T-cell (primary cell): ENCODE measurements at regions of chr2 and their contacts with region 1.

Region 1: GRCh38 chr2:37414470-37414949 is 70.1 kb downstream of the QPCT start:
- DNase-seq: peak in 2 of 35 experiments; percentile 18 to 71
- ATAC-seq: peak; percentile 60 to 82 (median 76)
- H3K4me3 ChIP-seq: no peak overlapping the region
- H3K4me3 Mint-ChIP-seq: no peak overlapping the region
- H3K27ac ChIP-seq: no peak overlapping the region
- H3K27ac Mint-ChIP-seq: peak overlapping the region in 1 of 2 donors; percentile 64
- H3K4me1 ChIP-seq: no peaks in the 10 kb centered on the region
- H3K4me1 Mint-ChIP-seq: peaks cover 8 to 14% (median 10%) of the 10 kb centered on the region in 3 donors
- H3K27me3 ChIP-seq: peaks cover 0 to 3% of the 10 kb centered on the region in 2 experiments
- H3K27me3 Mint-ChIP-seq: peaks cover 4 to 7% of the 10 kb centered on the region in 2 donors

Region 2: GRCh38 chr2:37300578-37300977 is 113.9 kb before region 1 on chr2:
- CTCF ChIA-PET with region 1: interaction called in 1 of 2 experiments, 12 read pairs
- POLR2A ChIA-PET with region 1: no interaction called
- DNase-seq: no peak
- ATAC-seq: no peak
- H3K4me3 ChIP-seq: no peak overlapping the region
- H3K4me3 Mint-ChIP-seq: no peak overlapping the region
- H3K27ac ChIP-seq: no peak overlapping the region
- H3K27ac Mint-ChIP-seq: no peak overlapping the region
- H3K4me1 ChIP-seq: peaks cover 0 to 4% of the 10 kb centered on the region in 2 experiments
- H3K4me1 Mint-ChIP-seq: peaks cover 36 to 40% (median 37%) of the 10 kb centered on the region in 3 donors
- H3K27me3 ChIP-seq: no peaks in the 10 kb centered on the region
- H3K27me3 Mint-ChIP-seq: no peaks in the 10 kb centered on the region

Region 3: GRCh38 chr2:37402636-37403035 is 11.9 kb before region 1 on chr2:
- CTCF ChIA-PET with region 1: interaction called, 6 to 10 read pairs
- POLR2A ChIA-PET with region 1: no interaction called
- DNase-seq: no peak
- ATAC-seq: no peak
- H3K4me3 ChIP-seq: no peak overlapping the region
- H3K4me3 Mint-ChIP-seq: no peak overlapping the region
- H3K27ac ChIP-seq: no peak overlapping the region
- H3K27ac Mint-ChIP-seq: no peak overlapping the region
- H3K4me1 ChIP-seq: no peaks in the 10 kb centered on the region
- H3K4me1 Mint-ChIP-seq: no peaks in the 10 kb centered on the region
- H3K27me3 ChIP-seq: no peaks in the 10 kb centered on the region
- H3K27me3 Mint-ChIP-seq: peaks cover 4 to 6% of the 10 kb centered on the region in 2 donors

Region 4: GRCh38 chr2:37471104-37471503 is 56.6 kb after region 1 on chr2:
- CTCF ChIA-PET with region 1: interaction called, 5 to 11 read pairs
- POLR2A ChIA-PET with region 1: no interaction called
- DNase-seq: no peak
- ATAC-seq: no peak
- H3K4me3 ChIP-seq: no peak overlapping the region
- H3K4me3 Mint-ChIP-seq: no peak overlapping the region
- H3K27ac ChIP-seq: no peak overlapping the region
- H3K27ac Mint-ChIP-seq: no peak overlapping the region
- H3K4me1 ChIP-seq: no peaks in the 10 kb centered on the region
- H3K4me1 Mint-ChIP-seq: no peaks in the 10 kb centered on the region
- H3K27me3 ChIP-seq: no peaks in the 10 kb centered on the region
- H3K27me3 Mint-ChIP-seq: peaks cover 0 to 5% of the 10 kb centered on the region in 2 donors

Region 5: DNA sequence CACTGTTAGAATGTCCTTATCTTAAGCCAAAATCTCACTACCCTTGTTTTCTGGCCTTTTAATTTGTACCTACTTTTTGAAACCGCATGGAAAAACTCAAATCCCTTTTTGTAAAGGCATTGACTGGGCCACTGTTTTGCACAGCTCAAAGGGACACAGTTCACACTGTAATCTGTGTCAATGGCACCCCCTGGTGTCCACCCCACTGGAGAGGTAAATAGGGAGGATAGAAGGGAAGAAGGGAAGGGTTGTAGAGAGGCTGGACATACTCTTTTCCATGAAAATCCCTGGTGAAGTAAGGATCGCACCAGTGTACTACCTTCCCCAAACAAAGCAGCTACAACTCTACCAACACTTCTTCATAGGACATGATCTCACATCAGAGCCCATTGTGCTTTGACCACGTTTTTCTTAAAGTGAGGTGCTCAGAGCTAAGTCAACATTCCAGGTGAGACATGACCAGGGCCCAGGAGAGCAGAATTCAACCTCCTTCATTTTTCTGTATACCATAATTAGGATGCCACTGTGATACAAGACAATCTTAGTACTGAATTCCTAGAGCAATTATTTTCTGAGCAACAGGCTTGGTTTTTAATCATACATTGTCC is 418.2 kb after region 1 on chr2:
- CTCF ChIA-PET with region 1: interaction called, 47 to 124 read pairs
- POLR2A ChIA-PET with region 1: no interaction called
- DNase-seq: peak; percentile 47 to 87 (median 79)
- ATAC-seq: peak; percentile 75 to 87 (median 82)
- H3K4me3 ChIP-seq: no peak overlapping the region
- H3K4me3 Mint-ChIP-seq: no peak overlapping the region
- H3K27ac ChIP-seq: no peak overlapping the region
- H3K27ac Mint-ChIP-seq: no peak overlapping the region
- H3K4me1 ChIP-seq: peaks cover 2 to 4% of the 10 kb centered on the region in 2 experiments
- H3K4me1 Mint-ChIP-seq: peaks cover 13 to 20% (median 14%) of the 10 kb centered on the region in 3 donors
- H3K27me3 ChIP-seq: no peaks in the 10 kb centered on the region
- H3K27me3 Mint-ChIP-seq: no peaks in the 10 kb centered on the region

Region 6: DNA sequence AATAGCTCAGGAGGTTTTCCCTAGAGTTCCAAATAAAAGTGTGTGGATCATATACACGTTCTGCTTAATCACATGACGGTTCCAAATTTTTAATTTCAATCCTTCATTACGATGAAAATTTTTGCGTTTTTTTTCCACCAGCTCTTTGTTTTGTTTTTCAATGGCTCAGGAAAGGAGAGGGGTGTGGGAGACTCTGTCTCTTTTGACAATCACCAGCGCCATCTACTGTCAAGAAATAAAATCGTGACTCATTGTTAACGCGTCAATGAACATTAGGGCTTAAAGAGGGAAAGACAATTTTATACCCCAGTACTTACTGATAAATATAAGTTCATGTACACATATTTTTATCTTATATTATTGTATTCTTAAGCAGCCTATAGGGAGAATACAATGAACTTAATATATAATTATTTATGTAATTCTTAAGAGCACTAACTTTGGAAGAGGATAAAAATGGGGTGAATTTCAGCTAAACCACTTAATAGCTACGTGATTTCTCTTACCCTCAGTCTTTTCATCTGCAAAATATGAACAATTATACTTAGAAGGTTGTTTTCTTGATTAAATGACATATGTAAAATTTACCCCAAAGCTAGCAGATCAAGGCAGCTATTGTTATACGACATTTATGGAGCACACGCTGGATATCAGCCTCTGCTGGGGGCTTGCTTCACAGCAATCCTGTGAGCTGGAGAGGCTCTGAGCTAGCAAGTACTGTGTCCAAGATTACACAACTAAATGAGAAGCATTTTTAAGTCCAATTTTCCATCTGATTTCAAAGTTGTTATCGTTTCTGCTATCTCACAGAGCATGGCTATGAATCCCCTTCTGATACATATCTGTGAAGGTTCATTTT is 463.2 kb after region 1 on chr2:
- CTCF ChIA-PET with region 1: interaction called, 16 to 47 read pairs
- POLR2A ChIA-PET with region 1: no interaction called
- DNase-seq: peak in 5 of 35 experiments; percentile 12 to 78 (median 15)
- ATAC-seq: peak; percentile 62 to 81 (median 67)
- H3K4me3 ChIP-seq: no peak overlapping the region
- H3K4me3 Mint-ChIP-seq: no peak overlapping the region
- H3K27ac ChIP-seq: no peak overlapping the region
- H3K27ac Mint-ChIP-seq: no peak overlapping the region
- H3K4me1 ChIP-seq: no peaks in the 10 kb centered on the region
- H3K4me1 Mint-ChIP-seq: peaks cover 0 to 6% (median 2%) of the 10 kb centered on the region in 3 donors
- H3K27me3 ChIP-seq: peaks cover 0 to 15% of the 10 kb centered on the region in 2 experiments
- H3K27me3 Mint-ChIP-seq: peaks cover 17% of the 10 kb centered on the region in 2 donors

Region 7: GRCh38 chr2:37916512-37917082 is 502.1 kb after region 1 on chr2:
- CTCF ChIA-PET with region 1: no interaction called
- POLR2A ChIA-PET with region 1: interaction called in 1 of 2 experiments, 17 read pairs
- DNase-seq: no peak
- ATAC-seq: no peak
- H3K4me3 ChIP-seq: no peak overlapping the region
- H3K4me3 Mint-ChIP-seq: no peak overlapping the region
- H3K27ac ChIP-seq: no peak overlapping the region
- H3K27ac Mint-ChIP-seq: no peak overlapping the region
- H3K4me1 ChIP-seq: no peaks in the 10 kb centered on the region
- H3K4me1 Mint-ChIP-seq: no peaks in the 10 kb centered on the region
- H3K27me3 ChIP-seq: peaks cover 0 to 5% of the 10 kb centered on the region in 2 experiments
- H3K27me3 Mint-ChIP-seq: peaks cover 12 to 18% of the 10 kb centered on the region in 2 donors

Region 8: GRCh38 chr2:38159597-38159996 is 745.1 kb after region 1 on chr2:
- CTCF ChIA-PET with region 1: no interaction called
- POLR2A ChIA-PET with region 1: no interaction called
- DNase-seq: no peak
- ATAC-seq: no peak
- H3K4me3 ChIP-seq: no peak overlapping the region
- H3K4me3 Mint-ChIP-seq: no peak overlapping the region
- H3K27ac ChIP-seq: no peak overlapping the region
- H3K27ac Mint-ChIP-seq: no peak overlapping the region
- H3K4me1 ChIP-seq: no peaks in the 10 kb centered on the region
- H3K4me1 Mint-ChIP-seq: no peaks in the 10 kb centered on the region
- H3K27me3 ChIP-seq: peaks cover 3 to 7% of the 10 kb centered on the region in 2 experiments
- H3K27me3 Mint-ChIP-seq: peaks cover 22 to 38% of the 10 kb centered on the region in 2 donors